PC-3 (cell line): ENCODE measurements at regions of chr6 and their contacts with region 1.

Region 1: GRCh38 chr6:167855825-167856425 is 29.2 kb downstream of the AFDN start:
- DNase-seq: peak; percentile 88
- ATAC-seq: peak; percentile 96
- H3K4me3 ChIP-seq: peak overlapping the region; percentile 14; the same call in 1 of the 2 replicates
- H3K27ac ChIP-seq: peak overlapping the region; percentile 83
- H3K4me1 ChIP-seq: peaks cover 52% of the 10 kb centered on the region
- H3K27me3 ChIP-seq: no peaks in the 10 kb centered on the region
- CTCF ChIP-seq: no peak

Region 2: DNA sequence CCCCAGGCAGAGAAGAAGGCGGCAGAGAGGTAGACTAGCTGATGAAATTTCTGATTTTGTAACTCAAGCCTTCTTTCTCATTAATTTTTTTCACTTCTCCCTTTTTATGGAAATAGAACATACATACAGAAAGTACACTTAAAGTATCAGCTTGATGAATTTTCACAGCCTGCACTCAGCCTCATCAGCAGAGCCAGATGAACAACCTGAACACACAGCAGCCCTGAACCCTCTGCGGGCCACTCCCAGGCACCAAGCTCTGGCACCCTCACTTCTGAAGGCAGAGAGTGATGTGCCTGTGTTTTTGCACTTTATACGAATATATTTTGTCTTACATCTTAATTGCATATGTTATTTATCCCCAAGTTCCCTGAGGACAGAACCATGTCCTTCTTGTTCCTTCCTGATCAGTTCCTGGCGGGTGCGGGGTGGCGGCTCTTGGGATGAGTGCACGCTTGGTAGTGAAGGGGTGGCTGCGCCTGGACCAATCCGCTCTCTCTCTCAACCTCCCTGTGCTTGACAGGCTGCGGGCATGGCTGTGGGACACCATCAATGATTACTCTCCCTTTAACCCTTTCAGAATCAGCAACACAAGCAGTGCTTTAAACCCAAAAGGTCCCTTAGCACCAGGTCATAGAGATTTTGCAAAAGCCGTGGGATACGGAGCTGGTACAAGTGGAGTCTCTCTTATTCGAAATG is 64.0 kb before region 1 on chr6:
- CTCF ChIA-PET with region 1: interaction called, 16 read pairs
- POLR2A ChIA-PET with region 1: interaction called, 4 read pairs
- intact Hi-C with region 1: no loop called
- DNase-seq: no peak
- ATAC-seq: no peak
- H3K4me3 ChIP-seq: no peak overlapping the region
- H3K27ac ChIP-seq: no peak overlapping the region
- H3K4me1 ChIP-seq: no peaks in the 10 kb centered on the region; the same call in 1 of the 2 replicates
- H3K27me3 ChIP-seq: peaks cover 8% of the 10 kb centered on the region
- CTCF ChIP-seq: no peak

Region 3: DNA sequence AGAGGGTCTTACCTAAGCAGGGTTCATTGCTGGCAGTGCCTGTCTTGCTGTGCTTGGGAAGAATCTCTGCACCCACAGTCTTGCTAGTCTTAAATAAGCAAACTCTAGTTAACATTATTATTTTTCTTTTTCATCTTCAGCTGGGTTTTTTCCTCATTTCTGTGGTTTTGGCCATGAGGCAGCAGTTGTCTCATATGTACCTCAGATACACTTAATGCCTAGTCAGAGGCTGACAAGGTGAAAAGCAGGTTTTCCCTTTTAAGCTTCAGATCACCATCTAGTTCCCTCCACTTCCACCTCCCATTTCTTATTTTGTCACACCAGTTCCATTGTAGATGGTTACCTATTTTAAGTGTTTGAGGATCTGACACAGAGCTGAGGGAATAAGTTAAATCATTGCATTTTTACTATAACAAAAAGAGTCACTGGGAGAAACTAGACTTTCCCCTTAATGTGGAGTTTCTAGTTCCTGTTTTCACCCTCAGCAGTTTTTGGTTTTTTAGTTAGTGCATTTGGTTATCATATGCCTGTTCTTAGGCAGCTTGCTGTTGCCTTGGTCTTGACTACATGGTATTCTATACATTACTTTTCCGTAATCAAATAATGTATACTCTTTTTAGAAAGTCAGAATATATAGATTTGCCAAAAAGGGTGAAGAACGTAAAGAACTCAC is 16.7 kb after region 1 on chr6:
- CTCF ChIA-PET with region 1: no interaction called
- POLR2A ChIA-PET with region 1: no interaction called
- intact Hi-C with region 1: loop called (anchors 1 kb)
- DNase-seq: no peak
- ATAC-seq: no peak
- H3K4me3 ChIP-seq: no peak overlapping the region
- H3K27ac ChIP-seq: no peak overlapping the region
- H3K4me1 ChIP-seq: no peaks in the 10 kb centered on the region
- H3K27me3 ChIP-seq: no peaks in the 10 kb centered on the region
- CTCF ChIP-seq: no peak

Region 4: DNA sequence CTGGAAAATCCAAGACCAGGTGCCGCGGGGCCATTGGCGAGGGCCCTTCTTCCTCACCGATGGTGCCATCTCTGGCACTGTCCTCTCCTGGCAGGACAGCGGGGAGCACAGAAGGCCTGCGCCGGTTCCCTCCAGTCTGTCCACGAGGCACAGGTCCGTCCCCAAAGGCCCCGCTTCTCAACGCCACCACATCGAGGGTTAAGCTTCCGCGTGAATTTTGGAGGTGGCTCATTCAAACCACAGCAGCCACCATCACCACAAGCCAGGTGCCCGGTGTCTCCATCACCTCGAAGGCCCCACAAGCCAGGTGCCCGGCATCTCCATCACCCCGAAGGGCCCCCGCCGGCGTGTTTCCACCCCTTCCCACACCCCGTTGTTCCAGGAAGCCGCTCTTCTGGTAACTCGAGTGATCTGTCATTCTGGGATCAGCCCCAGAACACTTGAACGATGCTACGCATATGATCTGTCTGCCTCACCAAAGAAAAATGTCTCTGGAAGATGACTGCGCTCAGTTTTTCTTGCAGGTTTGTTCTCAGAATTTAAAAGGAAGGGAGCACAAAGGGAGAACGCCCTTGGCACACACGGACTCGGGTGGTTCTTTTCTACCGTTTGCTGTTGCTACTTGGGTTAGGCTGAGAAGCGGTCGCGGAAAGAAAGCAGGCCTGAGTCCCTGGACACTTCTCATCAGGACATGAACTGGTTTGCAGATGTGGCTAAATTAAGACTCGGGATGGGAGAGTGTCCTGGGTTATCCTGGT is 131.7 kb after region 1 on chr6:
- CTCF ChIA-PET with region 1: no interaction called
- POLR2A ChIA-PET with region 1: no interaction called
- intact Hi-C with region 1: no loop called
- DNase-seq: no peak
- ATAC-seq: no peak
- H3K4me3 ChIP-seq: no peak overlapping the region
- H3K27ac ChIP-seq: no peak overlapping the region
- H3K4me1 ChIP-seq: no peaks in the 10 kb centered on the region
- H3K27me3 ChIP-seq: no peaks in the 10 kb centered on the region
- CTCF ChIP-seq: no peak

Region 5: DNA sequence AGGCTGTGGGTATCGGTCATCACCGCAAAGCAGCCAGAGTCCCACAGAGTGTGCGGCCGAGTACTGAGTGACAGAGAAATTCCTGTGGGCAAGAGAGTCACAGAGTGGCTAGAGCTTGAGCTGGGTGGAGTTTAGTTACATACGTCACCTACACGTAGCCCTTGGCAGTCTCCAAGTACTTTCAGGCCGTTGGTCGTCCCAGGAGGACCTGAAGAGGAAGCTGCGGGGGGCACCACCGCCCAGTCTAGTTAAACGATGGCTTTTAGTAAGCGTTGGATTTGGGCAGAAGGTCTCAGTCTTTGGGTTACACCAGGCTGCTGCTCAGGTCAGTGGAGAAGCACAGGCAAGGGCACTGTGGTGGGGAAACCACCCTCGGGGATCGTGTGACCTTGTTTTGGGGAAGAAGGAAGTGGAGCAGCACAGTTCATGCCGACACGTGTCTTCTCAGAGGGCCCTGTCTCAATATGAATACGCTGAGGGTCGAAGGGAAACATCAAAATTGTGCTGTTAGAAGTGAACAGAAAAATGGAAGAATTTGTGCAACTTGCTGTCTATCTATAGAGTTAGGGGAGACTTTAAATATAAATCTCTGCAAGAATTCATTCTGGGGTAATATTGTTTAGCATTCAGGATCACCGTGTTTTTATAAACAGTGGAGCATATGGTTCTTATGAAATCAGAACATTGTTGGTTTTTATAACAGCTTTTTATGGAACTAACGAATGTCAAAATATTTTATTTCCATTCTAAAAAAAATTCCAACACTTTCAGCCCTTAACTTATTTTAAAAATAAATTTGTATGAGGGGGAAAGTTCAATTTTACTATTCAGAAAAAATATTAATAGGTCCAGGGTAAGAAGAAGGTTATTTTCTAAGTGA is 170.1 kb after region 1 on chr6:
- CTCF ChIA-PET with region 1: no interaction called
- POLR2A ChIA-PET with region 1: no interaction called
- intact Hi-C with region 1: loop called (anchors 1 kb)
- DNase-seq: no peak
- ATAC-seq: no peak
- H3K4me3 ChIP-seq: no peak overlapping the region
- H3K27ac ChIP-seq: no peak overlapping the region
- H3K4me1 ChIP-seq: peaks cover 7% of the 10 kb centered on the region
- H3K27me3 ChIP-seq: no peaks in the 10 kb centered on the region
- CTCF ChIP-seq: no peak